Sigmoid colon (tissue), 7 donors: ENCODE measurements at regions of chr12 and their contacts with region 1.

Region 1: GRCh38 chr12:114662512-114663177 is 21.3 kb downstream of the TBX3 start:
- DNase-seq: peak; percentile 82
- H3K4me3 ChIP-seq: no peak overlapping the region
- H3K27ac ChIP-seq: no peak overlapping the region
- H3K4me1 ChIP-seq: peaks cover 0 to 10% (median 5%) of the 10 kb centered on the region in 4 donors
- H3K27me3 ChIP-seq: peaks cover 24 to 59% (median 44%) of the 10 kb centered on the region in 3 donors
- CTCF ChIP-seq: peak; percentile 86 to 92 (median 87)
- EP300 ChIP-seq: no peak
- POLR2A ChIP-seq: no peak

Region 2: DNA sequence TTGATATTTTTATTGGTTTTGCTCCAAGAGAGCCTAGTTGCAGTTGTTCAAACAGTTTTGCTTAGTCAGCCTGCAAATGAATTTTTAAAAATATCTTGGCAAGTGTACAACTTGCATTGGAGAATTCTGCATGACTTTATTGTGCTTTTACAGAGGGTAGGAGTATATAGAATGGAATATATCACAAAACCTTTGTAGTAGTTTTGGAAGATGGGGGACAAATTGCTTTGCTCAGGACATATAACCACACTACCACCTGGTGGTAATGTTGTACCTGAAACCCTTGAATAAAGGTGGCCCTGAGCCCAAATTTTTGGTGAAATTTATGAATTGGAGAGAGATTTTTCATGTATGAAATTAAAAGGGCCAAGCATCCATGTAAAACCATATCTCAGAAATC is 969.7 kb after region 1 on chr12:
- intact Hi-C with region 1: loop called (anchors 10 kb)
- DNase-seq: no peak
- H3K4me3 ChIP-seq: no peak overlapping the region
- H3K27ac ChIP-seq: no peak overlapping the region
- H3K4me1 ChIP-seq: peaks cover 0 to 5% (median 0%) of the 10 kb centered on the region in 4 donors
- H3K27me3 ChIP-seq: no peaks in the 10 kb centered on the region
- CTCF ChIP-seq: no peak
- EP300 ChIP-seq: no peak
- POLR2A ChIP-seq: no peak

Region 3: GRCh38 chr12:115752913-115753726 is 1090.5 kb after region 1 on chr12:
- intact Hi-C with region 1: loop called (anchors 1 kb)
- DNase-seq: no peak
- H3K4me3 ChIP-seq: no peak overlapping the region
- H3K27ac ChIP-seq: no peak overlapping the region
- H3K4me1 ChIP-seq: no peaks in the 10 kb centered on the region
- H3K27me3 ChIP-seq: peaks cover 0 to 45% (median 4%) of the 10 kb centered on the region in 3 donors
- CTCF ChIP-seq: peak; percentile 44 to 72 (median 59)
- EP300 ChIP-seq: no peak
- POLR2A ChIP-seq: no peak